ENCODE measurements at regions of chr20 and their contacts with region 1.

Region 1: DNA sequence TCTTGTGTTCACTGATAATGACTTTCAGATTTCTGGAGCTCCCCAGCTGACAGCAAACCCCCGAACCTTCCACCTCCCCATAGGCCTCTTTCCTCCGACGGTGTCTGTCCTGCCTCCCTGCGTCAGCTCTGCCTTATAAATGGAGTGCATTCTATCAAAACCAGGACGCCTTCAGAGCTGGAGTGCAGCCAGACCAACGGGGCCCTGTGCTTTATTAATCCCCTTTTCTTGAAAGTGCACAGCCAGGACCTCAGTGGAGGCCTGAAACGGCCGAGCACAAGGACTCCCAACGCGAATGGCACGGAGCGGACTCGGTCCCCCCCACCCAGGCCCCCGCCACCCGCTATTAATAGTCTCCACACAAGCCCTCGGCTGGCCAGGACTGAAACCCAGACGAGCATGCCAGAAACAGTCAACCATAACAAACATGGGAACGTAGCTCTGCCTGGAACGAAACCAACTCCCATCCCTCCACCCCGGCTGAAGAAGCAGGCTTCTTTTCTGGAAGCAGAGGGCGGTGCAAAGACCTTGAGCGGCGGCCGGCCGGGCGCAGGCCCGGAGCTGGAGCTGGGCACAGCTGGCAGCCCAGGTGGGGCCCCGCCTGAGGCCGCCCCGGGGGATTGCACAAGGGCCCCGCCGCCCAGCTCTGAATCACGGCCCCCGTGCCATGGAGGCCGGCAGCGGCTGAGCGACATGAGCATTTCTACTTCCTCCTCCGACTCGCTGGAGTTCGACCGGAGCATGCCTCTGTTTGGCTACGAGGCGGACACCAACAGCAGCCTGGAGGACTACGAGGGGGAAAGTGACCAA is 42.3 kb upstream of the NAA20 start:
- DNase-seq: peak; percentile 95
- H3K4me3 Mint-ChIP-seq: peak overlapping the region; percentile 80
- H3K27ac Mint-ChIP-seq: peak overlapping the region; percentile 83
- H3K4me1 Mint-ChIP-seq: peaks cover 36% of the 10 kb centered on the region
- H3K27me3 Mint-ChIP-seq: no peaks in the 10 kb centered on the region
- CTCF ChIP-seq: no peak

Region 2: GRCh38 chr20:19735446-19735845 is 239.4 kb before region 1 on chr20:
- CTCF ChIA-PET with region 1: interaction called, 4 read pairs
- POLR2A ChIA-PET with region 1: interaction called, 63 read pairs
- intact Hi-C with region 1: no loop called
- DNase-seq: peak; percentile 96
- H3K4me3 Mint-ChIP-seq: peak overlapping the region; percentile 27
- H3K27ac Mint-ChIP-seq: peak overlapping the region; percentile 87
- H3K4me1 Mint-ChIP-seq: peaks cover 25% of the 10 kb centered on the region
- H3K27me3 Mint-ChIP-seq: no peaks in the 10 kb centered on the region
- CTCF ChIP-seq: no peak

Region 3: DNA sequence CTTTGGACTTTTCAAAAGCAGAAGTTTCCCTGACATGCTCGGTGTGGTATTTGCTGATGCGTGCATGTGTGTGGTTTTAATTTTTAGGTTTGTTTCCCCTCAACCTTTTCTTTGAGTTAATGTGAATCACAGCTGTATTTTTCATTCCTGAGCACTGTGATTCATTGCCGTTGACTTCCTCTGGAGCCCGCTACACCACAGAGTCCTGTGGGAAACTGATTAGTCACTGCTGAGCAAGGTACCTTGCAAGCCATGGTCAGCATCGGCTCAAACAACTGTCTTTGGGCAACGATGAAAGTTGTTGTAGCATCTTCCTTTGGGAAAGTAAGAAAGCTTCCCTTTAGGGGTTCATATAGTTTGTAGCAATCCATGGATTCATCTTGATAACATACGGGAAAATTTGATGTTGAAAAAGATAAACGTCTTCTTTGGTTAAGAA is 159.3 kb before region 1 on chr20:
- CTCF ChIA-PET with region 1: interaction called, 6 read pairs
- POLR2A ChIA-PET with region 1: interaction called, 72 read pairs
- intact Hi-C with region 1: loop called (anchors 1 kb)
- DNase-seq: peak; percentile 95
- H3K4me3 Mint-ChIP-seq: peak overlapping the region; percentile 44
- H3K27ac Mint-ChIP-seq: peak overlapping the region; percentile 90
- H3K4me1 Mint-ChIP-seq: peaks cover 20% of the 10 kb centered on the region
- H3K27me3 Mint-ChIP-seq: no peaks in the 10 kb centered on the region
- CTCF ChIP-seq: no peak

Region 4: DNA sequence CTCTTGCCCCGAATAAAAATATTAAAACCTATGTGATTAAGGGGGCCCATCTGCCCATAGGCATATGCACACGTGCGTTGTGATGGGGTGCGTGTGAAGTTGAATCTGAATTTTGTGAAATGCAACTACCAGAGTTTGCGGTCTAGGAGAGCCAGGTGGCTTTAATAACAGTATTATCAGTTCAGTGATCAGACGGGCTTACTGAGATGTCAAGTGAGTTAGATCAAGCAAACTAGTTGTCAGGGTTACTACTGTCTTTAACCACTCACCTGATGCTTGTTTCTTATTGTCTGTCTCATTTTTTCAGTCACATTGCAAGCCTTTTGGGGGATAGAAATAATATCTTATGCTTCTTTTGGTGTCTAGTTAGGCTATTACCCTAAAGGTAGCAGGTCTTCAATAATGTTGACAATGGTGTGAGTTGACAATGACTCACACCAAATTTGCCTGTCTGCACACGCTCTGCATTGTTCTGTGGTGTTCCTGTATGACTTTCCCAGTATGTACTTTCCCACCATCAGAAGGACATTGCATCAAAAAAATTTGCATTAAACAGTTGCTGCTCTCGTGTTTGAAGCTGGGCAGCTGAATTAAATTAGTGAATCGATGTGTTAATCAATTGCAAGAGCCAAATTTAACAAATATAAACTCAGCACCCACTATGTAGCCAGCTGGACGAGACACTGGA is 60.8 kb before region 1 on chr20:
- CTCF ChIA-PET with region 1: interaction called, 46 read pairs
- POLR2A ChIA-PET with region 1: interaction called, 158 read pairs
- intact Hi-C with region 1: no loop called
- DNase-seq: peak; percentile 94
- H3K4me3 Mint-ChIP-seq: no peak overlapping the region
- H3K27ac Mint-ChIP-seq: peak overlapping the region; percentile 82
- H3K4me1 Mint-ChIP-seq: peaks cover 46% of the 10 kb centered on the region
- H3K27me3 Mint-ChIP-seq: no peaks in the 10 kb centered on the region
- CTCF ChIP-seq: no peak

Region 5: DNA sequence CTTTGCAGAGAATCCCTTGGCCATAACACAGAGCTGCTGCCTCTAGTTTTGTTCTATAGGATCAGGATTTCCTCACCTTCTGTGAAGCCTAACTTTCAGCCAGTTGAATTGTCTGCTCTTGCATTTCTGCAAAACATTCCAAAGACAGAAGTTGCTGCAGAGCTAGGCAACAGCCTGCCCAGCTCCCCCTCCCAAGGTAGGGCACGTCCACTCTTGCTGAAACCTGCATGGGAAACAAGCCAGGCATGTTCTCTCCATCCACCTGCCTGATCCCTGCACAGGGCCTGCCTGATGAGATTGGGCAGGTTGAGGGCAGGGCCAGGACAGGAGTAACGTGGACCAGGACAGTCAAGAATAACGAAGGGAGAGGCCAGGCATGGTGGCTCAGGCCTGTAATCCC is 16.6 kb before region 1 on chr20:
- CTCF ChIA-PET with region 1: interaction called, 26 read pairs
- POLR2A ChIA-PET with region 1: interaction called, 354 read pairs
- intact Hi-C with region 1: no loop called
- DNase-seq: peak; percentile 67
- H3K4me3 Mint-ChIP-seq: no peak overlapping the region
- H3K27ac Mint-ChIP-seq: peak overlapping the region; percentile 61
- H3K4me1 Mint-ChIP-seq: peaks cover 6% of the 10 kb centered on the region
- H3K27me3 Mint-ChIP-seq: no peaks in the 10 kb centered on the region
- CTCF ChIP-seq: no peak

Region 6: DNA sequence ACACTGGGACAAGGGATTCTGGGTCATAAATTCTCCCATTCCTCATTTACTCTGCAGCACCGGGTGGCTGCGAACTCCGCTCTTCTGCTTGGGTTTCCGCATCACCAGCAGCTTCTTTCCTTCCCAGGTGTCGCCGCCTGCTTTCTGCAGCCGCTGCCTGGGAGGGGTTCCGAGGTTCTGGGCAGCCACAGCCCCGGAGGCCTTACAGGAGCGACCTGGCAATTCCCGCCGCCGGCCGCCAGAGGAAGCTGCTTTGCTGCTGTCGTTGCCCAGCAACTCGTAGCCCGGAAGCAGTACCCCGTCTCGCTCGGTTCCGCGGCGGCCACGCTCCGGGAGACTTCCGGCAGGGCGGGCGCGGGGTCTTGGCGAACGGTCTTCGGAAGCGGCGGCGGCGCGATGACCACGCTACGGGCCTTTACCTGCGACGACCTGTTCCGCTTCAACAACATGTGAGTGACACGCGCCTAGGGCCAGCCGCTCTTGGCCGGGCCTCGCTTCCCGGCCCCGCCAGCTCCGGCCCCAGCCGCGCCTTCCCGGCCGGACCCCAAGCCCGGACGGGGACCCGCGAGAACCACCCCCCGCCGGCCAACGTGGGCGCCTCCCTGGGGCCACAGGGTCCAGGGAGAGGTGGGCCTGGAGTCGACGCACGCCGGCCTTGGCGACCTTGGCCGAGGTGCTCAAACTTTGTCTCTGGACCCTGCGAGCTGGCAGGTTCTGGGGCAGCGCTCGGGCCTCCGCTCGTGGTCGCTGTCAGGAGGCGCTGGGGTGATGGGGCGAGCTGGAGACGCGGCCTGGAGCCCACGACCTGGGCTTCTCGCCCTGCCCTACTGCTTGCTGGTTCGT is 42.4 kb after region 1 on chr20 and contains the start of gene NAA20:
- CTCF ChIA-PET with region 1: interaction called, 3 read pairs
- POLR2A ChIA-PET with region 1: interaction called, 79 read pairs
- intact Hi-C with region 1: loop called (anchors 2 kb)
- DNase-seq: peak; percentile 91
- H3K4me3 Mint-ChIP-seq: peak within 1 kb of the TSS; percentile 73
- H3K27ac Mint-ChIP-seq: peak within 1 kb of the TSS; percentile 95
- H3K4me1 Mint-ChIP-seq: peaks cover 41% of the 10 kb centered on the region
- H3K27me3 Mint-ChIP-seq: no peaks in the 10 kb centered on the region
- CTCF ChIP-seq: peak; percentile 71
- total RNA-seq, gene NAA20: 109 and 126 TPM in 2 replicates

Region 7: DNA sequence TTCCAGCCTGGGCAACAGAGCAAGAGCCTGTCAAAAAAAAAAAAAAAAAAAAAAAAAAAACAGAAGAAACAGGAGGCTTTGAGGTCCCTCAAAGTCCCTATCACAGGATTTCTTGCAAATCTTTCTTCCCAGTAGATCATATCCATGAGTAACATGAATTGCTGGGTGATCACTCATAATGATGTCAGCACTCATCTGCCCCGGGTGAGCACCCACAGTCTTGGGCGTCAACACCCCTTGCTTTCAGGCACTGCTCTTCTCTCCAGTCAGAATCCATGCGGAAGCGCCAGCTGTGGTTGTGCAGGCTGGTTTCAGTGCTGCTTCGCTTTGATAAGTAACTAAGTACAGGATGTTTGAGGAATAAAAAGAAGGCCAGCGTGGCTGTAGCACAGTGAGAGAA is 352.9 kb after region 1 on chr20:
- CTCF ChIA-PET with region 1: no interaction called
- POLR2A ChIA-PET with region 1: no interaction called
- intact Hi-C with region 1: no loop called
- DNase-seq: peak; percentile 31
- H3K4me3 Mint-ChIP-seq: no peak overlapping the region
- H3K27ac Mint-ChIP-seq: no peak overlapping the region
- H3K4me1 Mint-ChIP-seq: peaks cover 6% of the 10 kb centered on the region
- H3K27me3 Mint-ChIP-seq: no peaks in the 10 kb centered on the region
- CTCF ChIP-seq: no peak